Caco-2 (cell line): ENCODE measurements at regions of chr6 and their contacts with region 1.

Region 1: DNA sequence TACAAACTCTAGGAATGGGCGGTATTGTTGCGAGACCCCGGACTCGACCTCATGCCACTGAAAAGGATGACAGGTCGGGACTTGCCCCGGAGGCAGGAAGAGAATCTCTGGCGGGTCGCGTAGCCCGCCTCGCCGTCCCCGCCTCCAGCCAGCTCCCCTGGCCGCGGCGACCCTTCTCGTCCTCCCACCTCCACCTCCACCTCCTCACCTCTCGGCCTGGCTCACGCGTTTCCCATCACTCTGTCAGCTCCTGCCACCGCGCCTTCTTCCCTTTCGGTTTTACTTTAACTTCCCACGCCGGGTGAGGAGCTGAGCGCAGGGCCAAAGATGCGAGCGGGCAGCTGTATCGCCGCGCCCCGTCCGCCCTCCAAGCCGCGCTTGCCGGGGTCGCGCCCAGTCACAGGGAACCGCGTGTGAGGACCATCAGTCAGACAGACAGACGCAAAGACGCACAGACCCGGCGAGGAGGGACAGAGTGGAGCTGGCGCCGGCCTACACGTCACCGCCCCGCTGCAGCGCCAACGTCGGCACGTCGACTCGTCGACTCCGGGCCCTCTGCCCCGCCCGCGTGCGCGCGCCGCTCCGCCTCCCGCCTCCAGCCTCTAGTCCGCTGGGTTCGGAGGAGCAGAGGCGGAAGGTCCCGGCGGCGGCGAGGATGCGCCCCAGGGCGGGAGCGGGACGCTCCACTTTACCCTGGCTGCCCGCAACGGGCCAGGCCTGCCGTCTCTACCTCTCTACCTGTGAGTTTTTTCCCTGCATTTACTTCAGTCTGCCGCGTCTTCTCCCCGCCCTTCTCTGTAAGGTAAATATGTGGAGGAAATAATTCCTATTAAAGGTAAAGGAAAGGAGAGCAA is at the start of gene ASCC3:
- DNase-seq: peak; percentile 92 to 94
- H3K4me3 ChIP-seq: peak within 1 kb of the TSS; percentile 91
- H3K4me3 Mint-ChIP-seq: peak within 1 kb of the TSS; percentile 87
- H3K27ac Mint-ChIP-seq: peak within 1 kb of the TSS; percentile 92
- H3K4me1 ChIP-seq: peaks cover 29% of the 10 kb centered on the region
- H3K4me1 Mint-ChIP-seq: peaks cover 13% of the 10 kb centered on the region
- H3K27me3 ChIP-seq: no peaks in the 10 kb centered on the region
- H3K27me3 Mint-ChIP-seq: no peaks in the 10 kb centered on the region
- CTCF ChIP-seq: no peak
- total RNA-seq, gene ASCC3: 48.2 and 56.2 TPM in 2 replicates

Region 2: GRCh38 chr6:100803264-100804045 is 77.6 kb before region 1 on chr6:
- CTCF ChIA-PET with region 1: no interaction called
- POLR2A ChIA-PET with region 1: no interaction called
- intact Hi-C with region 1: loop called (anchors 5 kb)
- DNase-seq: no peak
- H3K4me3 ChIP-seq: no peak overlapping the region
- H3K4me3 Mint-ChIP-seq: no peak overlapping the region
- H3K27ac Mint-ChIP-seq: no peak overlapping the region
- H3K4me1 ChIP-seq: peaks cover 11% of the 10 kb centered on the region; the same call in 1 of the 2 replicates
- H3K4me1 Mint-ChIP-seq: peaks cover 7% of the 10 kb centered on the region
- H3K27me3 ChIP-seq: no peaks in the 10 kb centered on the region
- H3K27me3 Mint-ChIP-seq: no peaks in the 10 kb centered on the region
- CTCF ChIP-seq: no peak

Region 3: GRCh38 chr6:100892116-100892515 is 11.0 kb after region 1 on chr6:
- CTCF ChIA-PET with region 1: no interaction called
- POLR2A ChIA-PET with region 1: interaction called, 18 read pairs
- intact Hi-C with region 1: no loop called
- DNase-seq: no peak
- H3K4me3 ChIP-seq: no peak overlapping the region
- H3K4me3 Mint-ChIP-seq: no peak overlapping the region
- H3K27ac Mint-ChIP-seq: no peak overlapping the region
- H3K4me1 ChIP-seq: peaks cover 22% of the 10 kb centered on the region
- H3K4me1 Mint-ChIP-seq: no peaks in the 10 kb centered on the region
- H3K27me3 ChIP-seq: no peaks in the 10 kb centered on the region
- H3K27me3 Mint-ChIP-seq: no peaks in the 10 kb centered on the region
- CTCF ChIP-seq: no peak

Region 4: DNA sequence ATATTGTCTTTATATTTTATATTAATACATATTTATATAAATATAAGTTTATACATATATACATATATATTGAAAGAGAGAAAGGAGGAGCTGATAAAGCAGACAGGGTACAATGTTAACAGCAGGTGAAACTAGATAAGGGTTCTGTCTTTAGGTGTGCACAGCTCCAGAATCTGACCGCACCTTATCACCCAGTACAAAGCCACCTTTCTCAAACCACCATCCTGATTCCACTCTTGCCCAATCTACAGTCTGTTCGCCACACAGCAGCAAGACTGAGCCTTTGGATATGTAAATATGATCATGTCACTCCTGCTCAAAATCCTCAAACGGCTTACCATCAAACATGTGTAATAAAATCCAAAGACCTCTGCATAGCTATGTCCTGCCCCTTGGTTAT is 34.8 kb after region 1 on chr6:
- CTCF ChIA-PET with region 1: no interaction called
- POLR2A ChIA-PET with region 1: no interaction called
- intact Hi-C with region 1: loop called (anchors 5 kb)
- DNase-seq: peak; percentile 56 to 61
- H3K4me3 ChIP-seq: no peak overlapping the region
- H3K4me3 Mint-ChIP-seq: peak overlapping the region; percentile 6
- H3K27ac Mint-ChIP-seq: no peak overlapping the region
- H3K4me1 ChIP-seq: peaks cover 9% of the 10 kb centered on the region; the same call in 1 of the 2 replicates
- H3K4me1 Mint-ChIP-seq: peaks cover 20% of the 10 kb centered on the region
- H3K27me3 ChIP-seq: no peaks in the 10 kb centered on the region
- H3K27me3 Mint-ChIP-seq: no peaks in the 10 kb centered on the region
- CTCF ChIP-seq: no peak

Region 5: DNA sequence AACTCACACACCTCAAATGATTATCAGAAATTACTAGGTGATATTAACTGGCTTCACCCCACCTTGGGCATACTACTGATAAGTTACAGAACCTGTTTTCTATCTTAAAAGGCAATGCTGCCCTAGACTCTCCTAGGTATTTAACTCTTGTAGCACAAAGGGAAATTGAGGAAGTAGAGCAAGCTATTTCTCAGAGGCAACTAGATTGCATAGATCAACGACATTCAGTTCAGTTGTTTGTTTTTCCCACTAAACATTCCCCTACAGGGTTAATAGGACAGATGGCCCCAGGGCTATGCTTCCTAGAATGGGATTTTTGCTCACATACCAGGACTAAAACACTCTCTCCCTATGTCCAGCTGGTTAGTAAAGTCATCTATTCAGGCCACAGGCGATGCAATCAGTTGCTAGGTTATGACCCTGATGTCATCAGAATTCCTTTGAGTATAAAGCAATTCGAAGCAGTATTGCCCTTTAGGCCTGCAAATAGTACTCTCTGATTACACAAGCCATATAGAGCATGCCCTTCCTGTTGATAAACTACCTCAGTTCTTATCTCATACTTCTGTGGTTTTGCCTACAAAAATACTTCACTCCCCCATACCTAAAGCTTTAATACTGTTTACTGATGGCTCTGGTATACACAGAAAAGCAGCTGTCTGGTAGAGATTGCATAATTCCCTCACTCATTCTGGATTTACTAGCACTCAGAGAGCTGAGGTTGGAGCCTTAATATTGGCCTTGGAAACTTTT is 67.5 kb after region 1 on chr6:
- CTCF ChIA-PET with region 1: no interaction called
- POLR2A ChIA-PET with region 1: interaction called, 3 read pairs
- intact Hi-C with region 1: loop called (anchors 2 kb)
- DNase-seq: peak; percentile 72 to 76
- H3K4me3 ChIP-seq: no peak overlapping the region
- H3K4me3 Mint-ChIP-seq: no peak overlapping the region
- H3K27ac Mint-ChIP-seq: peak overlapping the region; percentile 69
- H3K4me1 ChIP-seq: peaks cover 16% of the 10 kb centered on the region
- H3K4me1 Mint-ChIP-seq: peaks cover 12% of the 10 kb centered on the region
- H3K27me3 ChIP-seq: no peaks in the 10 kb centered on the region
- H3K27me3 Mint-ChIP-seq: no peaks in the 10 kb centered on the region
- CTCF ChIP-seq: no peak

Region 6: DNA sequence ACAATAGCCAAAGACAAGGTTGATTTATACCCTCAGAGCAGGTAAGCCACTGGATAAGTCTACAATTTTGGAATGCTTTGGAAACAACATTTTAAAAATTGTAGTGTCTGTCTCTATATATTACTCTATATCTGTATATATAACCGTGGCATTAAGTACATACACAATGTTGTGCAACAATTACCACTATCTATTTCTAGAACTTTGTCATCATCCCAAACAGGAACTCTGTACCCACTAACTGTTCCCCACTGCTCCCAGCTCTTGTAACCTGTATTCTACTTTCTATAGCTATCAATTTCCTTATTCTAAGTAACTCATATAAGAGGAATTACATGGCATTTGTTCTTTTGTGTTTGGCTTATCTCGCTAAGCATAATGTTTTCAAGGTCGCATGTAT is 78.2 kb after region 1 on chr6:
- CTCF ChIA-PET with region 1: no interaction called
- POLR2A ChIA-PET with region 1: no interaction called
- intact Hi-C with region 1: no loop called
- DNase-seq: no peak
- H3K4me3 ChIP-seq: no peak overlapping the region
- H3K4me3 Mint-ChIP-seq: no peak overlapping the region
- H3K27ac Mint-ChIP-seq: no peak overlapping the region
- H3K4me1 ChIP-seq: no peaks in the 10 kb centered on the region
- H3K4me1 Mint-ChIP-seq: no peaks in the 10 kb centered on the region
- H3K27me3 ChIP-seq: no peaks in the 10 kb centered on the region
- H3K27me3 Mint-ChIP-seq: no peaks in the 10 kb centered on the region
- CTCF ChIP-seq: no peak